CD4-positive, alpha-beta T cell (primary cell): ENCODE measurements at regions of chr19 and their contacts with region 1.

Region 1: DNA sequence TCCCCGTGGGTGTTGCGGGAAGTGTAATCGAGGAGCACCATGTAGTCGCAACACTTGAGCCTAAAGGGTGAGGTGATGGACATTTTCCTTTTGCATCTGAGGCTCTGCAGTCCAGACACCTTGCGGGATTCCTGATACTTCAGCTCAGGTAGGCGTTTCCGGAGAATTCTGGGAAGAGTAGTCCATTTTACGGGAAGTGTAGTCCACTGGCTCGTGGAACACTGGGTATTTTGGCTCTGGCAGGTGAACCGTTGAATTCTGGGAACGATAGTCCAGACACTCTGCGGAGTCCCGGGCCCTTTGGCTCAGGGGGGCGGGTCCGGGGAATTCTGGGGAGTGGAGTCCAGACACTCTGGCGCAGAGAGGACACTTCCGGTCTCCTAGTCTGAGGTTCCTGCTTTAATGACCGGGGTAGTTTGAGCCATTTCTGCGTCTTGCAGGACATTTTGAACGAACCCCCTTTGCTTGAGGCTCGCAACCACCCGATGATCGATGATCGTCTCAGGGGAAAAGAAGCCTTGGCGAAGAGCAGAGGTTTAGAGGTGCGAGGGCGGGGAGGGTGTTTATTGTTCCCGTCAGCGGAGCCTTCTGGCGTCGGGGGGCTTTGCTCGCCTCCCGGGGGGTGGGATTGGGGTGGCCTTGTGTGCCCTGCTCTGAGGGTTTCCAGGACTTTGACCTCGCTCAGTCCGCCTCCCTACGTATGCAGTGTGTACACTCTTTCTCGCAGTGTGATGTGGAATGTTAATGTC is at the start of gene ZNF223:
- DNase-seq: peak; percentile 30 to 85 (median 65)
- ATAC-seq: peak; percentile 79
- H3K4me3 ChIP-seq: peak within 1 kb of the TSS; percentile 61
- H3K4me3 Mint-ChIP-seq: peak within 1 kb of the TSS; percentile 93
- H3K27ac ChIP-seq: no peak within 1 kb of the TSS
- H3K27ac Mint-ChIP-seq: peak within 1 kb of the TSS; percentile 40
- H3K4me1 ChIP-seq: peaks cover 17% of the 10 kb centered on the region
- H3K4me1 Mint-ChIP-seq: peaks cover 33% of the 10 kb centered on the region
- H3K27me3 ChIP-seq: no peaks in the 10 kb centered on the region
- H3K27me3 Mint-ChIP-seq: peaks cover 19% of the 10 kb centered on the region
- CTCF ChIP-seq: no peak
- total RNA-seq, gene ZNF223: 0.67 to 1.1 TPM

Region 2: GRCh38 chr19:43826787-43827754 is 224.8 kb before region 1 on chr19 and contains the start of gene ZNF283:
- CTCF ChIA-PET with region 1: no interaction called
- POLR2A ChIA-PET with region 1: no interaction called
- intact Hi-C with region 1: loop called in 1 of 2 experiments (anchors 5 kb)
- DNase-seq: peak; percentile 63 to 89 (median 79)
- ATAC-seq: peak; percentile 95
- H3K4me3 ChIP-seq: peak within 1 kb of the TSS; percentile 77
- H3K4me3 Mint-ChIP-seq: peak within 1 kb of the TSS; percentile 84
- H3K27ac ChIP-seq: no peak within 1 kb of the TSS
- H3K27ac Mint-ChIP-seq: peak within 1 kb of the TSS; percentile 12
- H3K4me1 ChIP-seq: peaks cover 16% of the 10 kb centered on the region
- H3K4me1 Mint-ChIP-seq: peaks cover 18% of the 10 kb centered on the region
- H3K27me3 ChIP-seq: no peaks in the 10 kb centered on the region
- H3K27me3 Mint-ChIP-seq: peaks cover 14% of the 10 kb centered on the region
- CTCF ChIP-seq: no peak
- total RNA-seq, gene ZNF283: 2.3 to 3.7 TPM

Region 3: DNA sequence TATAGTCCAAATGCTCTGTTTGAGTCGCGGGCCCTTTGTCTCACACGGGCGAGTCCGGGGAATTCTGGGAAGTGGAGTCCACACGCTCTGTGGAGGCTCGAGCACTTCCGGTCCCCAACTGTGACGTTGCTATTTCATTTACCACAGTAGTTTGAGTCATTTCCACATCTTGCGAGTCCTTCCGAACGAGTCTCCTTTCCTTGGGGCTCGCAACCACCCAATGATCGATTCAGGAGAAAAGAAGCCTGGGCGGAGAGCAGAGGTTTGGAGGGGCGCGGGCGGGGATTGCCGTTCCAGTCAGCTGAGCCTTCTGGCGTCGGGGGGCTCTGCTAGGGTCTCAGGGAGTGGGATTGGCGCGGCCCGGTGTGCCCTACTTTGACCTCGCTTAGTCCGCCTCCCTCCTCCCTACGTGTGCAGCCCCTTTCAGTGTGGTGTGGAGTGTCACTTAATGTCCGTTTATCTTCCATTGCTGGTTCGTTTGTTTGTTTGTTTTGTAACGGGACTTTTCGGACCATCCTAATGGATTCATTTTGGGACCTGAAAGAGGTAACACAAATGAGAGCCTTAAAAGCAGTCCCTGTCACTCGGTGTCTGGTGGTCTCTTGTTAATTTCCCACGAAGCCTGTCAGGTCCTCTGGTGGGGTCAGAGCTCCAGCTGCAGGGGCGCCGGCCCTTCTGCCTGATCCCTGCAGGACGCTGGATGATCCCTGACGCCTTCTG is 26.5 kb before region 1 on chr19 and contains the start of gene ZNF222:
- CTCF ChIA-PET with region 1: no interaction called
- POLR2A ChIA-PET with region 1: no interaction called
- intact Hi-C with region 1: loop called in 1 of 2 experiments (anchors 2 kb)
- DNase-seq: peak; percentile 53 to 90 (median 70)
- ATAC-seq: peak; percentile 97
- H3K4me3 ChIP-seq: peak within 1 kb of the TSS; percentile 79
- H3K4me3 Mint-ChIP-seq: peak within 1 kb of the TSS; percentile 98
- H3K27ac ChIP-seq: no peak within 1 kb of the TSS
- H3K27ac Mint-ChIP-seq: peak within 1 kb of the TSS; percentile 88
- H3K4me1 ChIP-seq: peaks cover 14% of the 10 kb centered on the region
- H3K4me1 Mint-ChIP-seq: peaks cover 30% of the 10 kb centered on the region
- H3K27me3 ChIP-seq: no peaks in the 10 kb centered on the region
- H3K27me3 Mint-ChIP-seq: peaks cover 9% of the 10 kb centered on the region
- CTCF ChIP-seq: no peak
- total RNA-seq, gene ZNF222: 4.5 to 5.8 TPM